PC-3 (cell line): ENCODE measurements at regions of chr2 and their contacts with region 1.

Region 1: GRCh38 chr2:46929612-46930011 is 14.0 kb upstream of the MCFD2 start:
- DNase-seq: peak; percentile 50
- ATAC-seq: peak; percentile 91
- H3K4me3 ChIP-seq: no peak overlapping the region
- H3K27ac ChIP-seq: no peak overlapping the region
- H3K4me1 ChIP-seq: peaks cover 15% of the 10 kb centered on the region
- H3K27me3 ChIP-seq: no peaks in the 10 kb centered on the region
- CTCF ChIP-seq: no peak

Region 2: DNA sequence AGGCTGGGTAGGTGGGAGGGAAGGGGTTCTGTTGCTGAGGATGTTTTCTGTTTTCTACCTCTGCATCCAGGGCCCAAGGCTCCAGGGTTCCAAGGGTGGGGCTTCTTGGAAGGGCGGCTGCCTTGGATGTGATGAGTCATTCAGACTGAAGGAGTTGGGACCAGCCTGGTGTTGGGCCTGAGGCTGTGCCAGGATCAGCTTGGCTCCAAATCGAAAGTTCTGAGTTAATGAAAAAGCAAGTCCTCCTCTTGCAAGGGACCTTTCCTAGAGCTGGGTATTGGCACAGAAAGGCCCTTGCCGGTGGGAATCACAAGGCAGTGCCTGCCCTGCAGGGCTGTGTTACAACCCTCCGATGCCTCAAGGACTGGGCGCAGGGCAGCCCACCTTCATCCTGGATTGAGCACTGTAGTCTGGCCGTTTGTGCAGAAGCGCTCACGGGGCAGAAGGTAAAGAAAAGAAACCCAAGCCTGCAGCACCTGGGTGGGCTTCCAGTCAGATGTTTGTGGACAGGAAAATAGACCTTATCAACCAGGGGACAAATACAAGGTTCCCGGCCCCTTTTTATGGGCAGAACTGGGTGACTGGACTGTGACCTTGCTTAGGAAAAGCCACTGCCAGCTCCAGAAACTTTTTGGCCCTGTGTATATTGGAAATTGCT is 38.5 kb after region 1 on chr2:
- CTCF ChIA-PET with region 1: interaction called, 6 read pairs
- POLR2A ChIA-PET with region 1: interaction called, 17 read pairs
- intact Hi-C with region 1: no loop called
- DNase-seq: peak; percentile 87
- ATAC-seq: peak; percentile 79
- H3K4me3 ChIP-seq: peak overlapping the region; percentile 56
- H3K27ac ChIP-seq: peak overlapping the region; percentile 98
- H3K4me1 ChIP-seq: peaks cover 67% of the 10 kb centered on the region
- H3K27me3 ChIP-seq: no peaks in the 10 kb centered on the region
- CTCF ChIP-seq: no peak